ENCODE measurements at regions of chr17 and their contacts with region 1.

Region 1: DNA sequence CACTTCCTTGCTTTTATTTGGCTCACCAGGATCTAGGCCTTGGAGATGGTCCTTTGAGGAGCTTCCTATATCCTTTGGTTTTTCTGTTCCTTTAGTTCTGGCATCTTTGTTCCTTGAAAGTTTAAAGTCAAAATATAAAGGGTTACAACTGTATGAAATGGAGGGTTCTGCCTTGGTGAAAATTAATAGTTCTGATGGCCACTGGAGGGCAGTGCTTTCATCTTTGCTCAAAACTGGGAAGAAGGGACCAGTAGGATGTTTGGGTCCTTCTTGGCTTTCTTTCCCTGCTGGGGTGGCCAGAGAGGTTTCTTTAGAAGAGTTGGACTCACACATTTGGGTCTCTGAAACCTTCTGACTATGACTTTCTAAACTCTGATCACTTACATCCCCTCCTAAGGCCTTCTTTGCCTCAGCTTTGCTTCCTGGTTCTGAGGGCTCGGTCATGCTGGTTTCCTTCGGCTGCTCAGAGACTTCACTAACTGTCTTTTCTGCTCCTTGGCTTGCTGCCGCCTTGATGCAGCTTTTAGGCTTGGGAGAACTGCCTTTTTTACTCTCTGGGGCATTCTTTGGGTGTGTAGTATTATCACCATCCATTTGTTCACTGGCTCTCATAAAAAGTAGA is 10.9 kb upstream of the ITGA2B start:
- DNase-seq: peak in 1 of 2 donors; percentile 36
- ATAC-seq: peak; percentile 55
- H3K4me3 ChIP-seq: no peak overlapping the region
- H3K27ac ChIP-seq: no peak overlapping the region
- H3K4me1 ChIP-seq: no peaks in the 10 kb centered on the region
- H3K27me3 ChIP-seq: no peaks in the 10 kb centered on the region

Region 2: GRCh38 chr17:44487170-44487569 is 86.8 kb after region 1 on chr17:
- intact Hi-C with region 1: no loop called
- DNase-seq: no peak
- ATAC-seq: no peak
- H3K4me3 ChIP-seq: no peak overlapping the region
- H3K27ac ChIP-seq: no peak overlapping the region
- H3K4me1 ChIP-seq: no peaks in the 10 kb centered on the region
- H3K27me3 ChIP-seq: no peaks in the 10 kb centered on the region

Region 3: GRCh38 chr17:44522883-44523671 is 122.7 kb after region 1 on chr17:
- intact Hi-C with region 1: loop called in 1 of 2 experiments (anchors 2 kb)
- DNase-seq: peak; percentile 86 to 88
- ATAC-seq: peak; percentile 63
- H3K4me3 ChIP-seq: no peak overlapping the region
- H3K27ac ChIP-seq: no peak overlapping the region
- H3K4me1 ChIP-seq: no peaks in the 10 kb centered on the region
- H3K27me3 ChIP-seq: no peaks in the 10 kb centered on the region